ENCODE measurements at regions of chr1 and their contacts with region 1.

Region 1: DNA sequence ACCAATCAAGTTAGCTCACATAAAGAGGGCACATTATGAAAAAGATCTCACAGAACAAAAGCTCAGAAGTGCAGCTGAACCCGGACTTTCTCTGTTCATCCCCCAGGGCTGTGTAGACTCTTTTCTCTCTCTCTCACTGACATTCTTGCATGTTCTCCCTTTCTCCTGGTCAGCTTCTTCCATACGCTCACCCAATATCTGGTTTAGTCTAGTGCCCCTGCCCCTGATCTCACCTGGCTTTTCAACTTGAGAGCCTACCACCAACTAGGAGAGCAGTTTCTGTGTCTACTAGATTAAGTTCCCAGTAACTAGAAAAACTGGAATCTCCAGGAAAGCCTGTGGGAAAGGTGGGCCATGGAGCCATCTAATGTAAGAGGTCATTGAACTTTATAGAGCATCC is 126.9 kb upstream of the GRIK3 start:
- DNase-seq: no peak
- H3K4me3 ChIP-seq: no peak overlapping the region
- H3K27ac ChIP-seq: no peak overlapping the region
- H3K4me1 ChIP-seq: no peaks in the 10 kb centered on the region
- H3K27me3 ChIP-seq: no peaks in the 10 kb centered on the region
- CTCF ChIP-seq: no peak
- POLR2A ChIP-seq: no peak

Region 2: GRCh38 chr1:36553591-36554322 is 607.4 kb before region 1 on chr1:
- intact Hi-C with region 1: loop called (anchors 5 kb)
- DNase-seq: peak in 1 of 2 donors; percentile 61
- H3K4me3 ChIP-seq: no peak overlapping the region
- H3K27ac ChIP-seq: no peak overlapping the region
- H3K4me1 ChIP-seq: no peaks in the 10 kb centered on the region
- H3K27me3 ChIP-seq: peaks cover 0 to 35% of the 10 kb centered on the region in 2 donors
- CTCF ChIP-seq: peak in 2 of 3 donors; percentile 36 to 54
- POLR2A ChIP-seq: no peak

Region 3: GRCh38 chr1:37186246-37186756 is 25.1 kb after region 1 on chr1:
- intact Hi-C with region 1: loop called (anchors 1 kb)
- DNase-seq: no peak
- H3K4me3 ChIP-seq: no peak overlapping the region
- H3K27ac ChIP-seq: no peak overlapping the region
- H3K4me1 ChIP-seq: no peaks in the 10 kb centered on the region
- H3K27me3 ChIP-seq: peaks cover 0 to 7% of the 10 kb centered on the region in 2 donors
- CTCF ChIP-seq: no peak
- POLR2A ChIP-seq: no peak

Region 4: GRCh38 chr1:37458528-37458927 is 297.4 kb after region 1 on chr1:
- intact Hi-C with region 1: no loop called
- DNase-seq: no peak
- H3K4me3 ChIP-seq: no peak overlapping the region
- H3K27ac ChIP-seq: no peak overlapping the region
- H3K4me1 ChIP-seq: no peaks in the 10 kb centered on the region
- H3K27me3 ChIP-seq: no peaks in the 10 kb centered on the region
- CTCF ChIP-seq: no peak
- POLR2A ChIP-seq: no peak